ENCODE measurements at regions of chr17 and their contacts with region 1.

Region 1: DNA sequence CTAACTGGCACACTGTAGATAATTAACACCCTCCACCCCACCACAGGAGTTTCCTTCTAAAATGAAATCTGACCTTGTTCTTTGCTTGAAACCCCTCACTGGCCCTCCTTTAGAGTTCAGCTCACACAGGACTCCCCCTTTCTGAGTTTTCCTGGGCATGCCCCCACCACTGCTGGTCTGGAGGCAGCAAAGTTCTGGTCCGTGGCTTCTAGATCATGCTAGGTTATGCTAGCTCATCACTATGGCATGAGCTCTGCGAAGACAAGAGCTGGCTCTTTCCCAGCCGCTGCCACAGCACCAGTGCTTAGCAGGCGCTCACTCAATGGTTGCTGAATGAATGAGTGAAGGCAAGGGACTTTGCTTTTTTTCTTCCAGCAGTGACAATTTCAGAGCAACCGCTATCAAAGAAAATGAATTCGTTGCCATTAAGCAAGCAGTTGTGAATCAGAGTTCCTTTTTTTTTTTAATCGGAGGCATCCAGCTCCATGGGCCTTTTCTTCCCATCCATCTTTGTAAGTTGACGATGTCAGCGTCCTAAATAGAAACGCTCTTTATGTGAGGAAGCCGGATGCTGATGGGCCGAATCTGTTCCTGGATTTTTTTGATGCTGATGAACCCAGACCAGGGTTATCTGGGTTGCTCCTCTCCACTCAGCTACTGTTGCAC is 80.8 kb upstream of the NOL11 start:
- DNase-seq: no peak
- ATAC-seq: no peak
- H3K4me3 ChIP-seq: no peak overlapping the region
- H3K27ac ChIP-seq: no peak overlapping the region
- H3K4me1 ChIP-seq: no peaks in the 10 kb centered on the region
- H3K27me3 ChIP-seq: no peaks in the 10 kb centered on the region
- CTCF ChIP-seq: no peak
- POLR2A ChIP-seq: no peak

Region 2: DNA sequence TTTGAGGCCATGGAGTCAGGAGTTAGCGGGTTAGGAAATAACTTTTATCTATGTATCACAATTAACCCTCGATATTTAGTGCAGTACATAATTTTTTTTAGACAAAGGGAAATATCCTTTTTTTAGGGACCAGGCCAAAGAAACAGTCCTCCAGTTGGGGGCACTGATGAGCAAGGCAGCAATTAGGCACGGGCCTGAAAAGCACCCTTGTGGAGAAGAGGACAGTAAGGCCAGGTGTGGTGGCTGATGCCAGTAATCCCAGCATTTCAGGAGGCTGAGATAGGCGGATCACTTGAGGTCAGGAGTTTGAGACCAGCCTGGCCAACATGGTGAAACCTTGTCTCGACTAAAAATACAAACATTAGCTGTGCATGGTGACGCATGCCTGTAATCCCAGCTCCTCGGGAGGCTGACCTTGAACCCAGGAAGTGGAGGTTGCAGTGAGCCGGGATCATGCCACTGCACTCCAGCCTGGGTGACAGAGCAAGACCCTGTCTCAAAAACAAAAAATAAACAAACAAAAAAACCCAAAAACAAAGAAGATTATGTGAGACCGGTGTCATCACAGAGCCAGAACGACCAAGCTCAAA is 77.5 kb before region 1 on chr17:
- in situ Hi-C with region 1: no loop called
- intact Hi-C with region 1: no loop called
- DNase-seq: no peak
- ATAC-seq: no peak
- H3K4me3 ChIP-seq: no peak overlapping the region
- H3K27ac ChIP-seq: no peak overlapping the region
- H3K4me1 ChIP-seq: no peaks in the 10 kb centered on the region
- H3K27me3 ChIP-seq: no peaks in the 10 kb centered on the region
- CTCF ChIP-seq: no peak
- POLR2A ChIP-seq: no peak

Region 3: GRCh38 chr17:67656494-67657203 is 19.7 kb after region 1 on chr17:
- in situ Hi-C with region 1: no loop called
- intact Hi-C with region 1: loop called (anchors 1 kb)
- DNase-seq: no peak
- ATAC-seq: no peak
- H3K4me3 ChIP-seq: no peak overlapping the region
- H3K27ac ChIP-seq: no peak overlapping the region
- H3K4me1 ChIP-seq: no peaks in the 10 kb centered on the region
- H3K27me3 ChIP-seq: no peaks in the 10 kb centered on the region
- CTCF ChIP-seq: no peak
- POLR2A ChIP-seq: no peak

Region 4: DNA sequence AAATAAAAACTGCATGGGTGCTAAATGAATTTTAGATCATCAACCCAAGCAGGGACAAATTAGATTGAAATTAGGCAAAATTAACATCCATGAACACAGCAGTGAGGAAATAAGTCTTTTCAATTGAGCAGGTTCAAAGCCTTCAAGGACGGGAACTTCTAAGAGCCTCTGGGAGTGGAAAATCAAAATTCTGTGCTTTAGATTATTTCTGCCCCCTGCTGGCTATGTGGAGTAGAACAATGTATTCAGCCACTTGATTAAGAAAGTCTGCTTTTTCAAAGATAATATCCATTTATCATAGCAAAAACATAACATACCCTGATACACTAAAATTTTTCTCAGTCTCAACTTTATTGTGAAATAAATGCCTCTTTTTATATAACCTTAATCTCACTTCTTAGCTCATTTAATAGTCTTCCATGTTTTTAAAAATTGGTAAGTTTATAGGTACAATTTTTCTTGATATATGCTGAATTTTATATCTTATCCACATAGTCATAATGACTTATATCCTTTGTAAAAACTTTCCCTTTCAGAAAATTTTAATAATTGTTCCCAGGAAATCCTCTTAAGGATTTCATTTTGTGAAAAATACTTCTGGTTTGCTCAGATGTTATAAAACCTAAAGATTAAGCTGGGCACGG is 52.7 kb after region 1 on chr17:
- in situ Hi-C with region 1: no loop called
- intact Hi-C with region 1: no loop called
- DNase-seq: peak in 1 of 2 donors; percentile 3
- ATAC-seq: peak; percentile 47 to 55
- H3K4me3 ChIP-seq: no peak overlapping the region
- H3K27ac ChIP-seq: no peak overlapping the region
- H3K4me1 ChIP-seq: no peaks in the 10 kb centered on the region
- H3K27me3 ChIP-seq: no peaks in the 10 kb centered on the region
- CTCF ChIP-seq: peak; percentile 65 to 80 (median 77)
- POLR2A ChIP-seq: no peak

Region 5: GRCh38 chr17:67800495-67800928 is 163.5 kb after region 1 on chr17:
- in situ Hi-C with region 1: no loop called
- intact Hi-C with region 1: no loop called
- DNase-seq: peak; percentile 61 to 70
- ATAC-seq: peak; percentile 94
- H3K4me3 ChIP-seq: no peak overlapping the region
- H3K27ac ChIP-seq: no peak overlapping the region
- H3K4me1 ChIP-seq: no peaks in the 10 kb centered on the region
- H3K27me3 ChIP-seq: no peaks in the 10 kb centered on the region
- CTCF ChIP-seq: peak; percentile 16 to 66 (median 62)
- POLR2A ChIP-seq: no peak